Esophagus muscularis mucosa (tissue), 4 donors: ENCODE measurements at regions of chr5 and their contacts with region 1.

Region 1: GRCh38 chr5:56050551-56051255 is 55.9 kb upstream of the IL6ST start:
- DNase-seq: no peak
- H3K4me3 ChIP-seq: no peak overlapping the region
- H3K27ac ChIP-seq: peak overlapping the region in 2 of 4 donors; percentile 11 to 31
- H3K4me1 ChIP-seq: peaks cover 7 to 13% (median 12%) of the 10 kb centered on the region in 4 donors
- H3K27me3 ChIP-seq: no peaks in the 10 kb centered on the region
- CTCF ChIP-seq: no peak
- EP300 ChIP-seq: no peak
- POLR2A ChIP-seq: no peak

Region 2: DNA sequence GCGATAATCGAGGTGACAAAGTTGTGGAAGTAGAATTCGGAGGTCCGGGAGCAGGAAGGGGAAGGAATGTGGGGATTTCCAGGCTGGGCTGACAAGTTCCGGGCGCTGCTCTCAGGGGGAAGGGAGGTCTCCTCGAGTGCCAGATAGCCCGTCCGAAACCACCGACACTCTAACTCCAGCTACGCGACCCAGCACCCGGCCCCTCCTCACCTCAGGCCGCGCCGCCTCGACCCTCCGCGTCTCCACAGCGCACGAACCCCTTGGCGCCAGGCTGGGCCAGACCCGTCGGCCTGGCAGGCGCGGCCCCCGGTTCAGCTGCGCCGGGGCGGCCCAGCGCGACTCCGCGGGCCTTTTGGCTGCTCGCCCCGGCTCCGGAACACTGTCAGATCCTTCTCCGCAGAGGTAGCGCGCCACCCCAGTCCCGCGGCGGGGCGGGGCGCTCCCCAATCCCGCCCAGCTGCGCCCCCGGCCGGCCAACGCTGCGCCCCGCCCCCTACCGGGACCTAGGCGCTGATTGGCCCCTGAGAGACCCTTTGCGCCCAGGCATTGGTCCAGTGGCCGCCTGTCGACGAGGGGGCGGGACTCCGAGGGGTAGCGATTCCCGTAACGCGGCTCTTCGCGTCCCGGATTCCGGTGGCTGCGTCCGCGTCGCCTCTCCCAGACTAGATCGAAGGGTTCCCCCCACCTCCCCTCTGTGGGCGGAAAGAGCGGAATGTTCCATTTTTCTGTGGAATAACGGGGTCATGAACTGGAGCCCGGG is 55.9 kb before region 1 on chr5 and contains the start of gene IL6ST:
- intact Hi-C with region 1: loop called (anchors 10 kb)
- DNase-seq: peak; percentile 100
- H3K4me3 ChIP-seq: peak within 1 kb of the TSS; percentile 81 to 93 (median 86)
- H3K27ac ChIP-seq: peak within 1 kb of the TSS; percentile 97 to 100 (median 99)
- H3K4me1 ChIP-seq: peaks cover 19 to 45% (median 43%) of the 10 kb centered on the region in 4 donors
- H3K27me3 ChIP-seq: no peaks in the 10 kb centered on the region
- CTCF ChIP-seq: peak in 1 of 3 experiments; percentile 12
- EP300 ChIP-seq: peak; percentile 85
- POLR2A ChIP-seq: peak; percentile 71
- total RNA-seq, gene IL6ST: 384 to 561 (median 517) TPM